H1 (cell line): ENCODE measurements at regions of chr6 and their contacts with region 1.

Region 1: GRCh38 chr6:72616406-72617015 is 5.4 kb upstream of the KCNQ5 start:
- DNase-seq: no peak
- H3K4me3 ChIP-seq: no peak overlapping the region
- H3K27ac ChIP-seq: no peak overlapping the region
- H3K4me1 ChIP-seq: peaks cover 0 to 13% (median 5%) of the 10 kb centered on the region in 4 experiments; a peak in 5 of 7 replicates
- H3K27me3 ChIP-seq: peaks cover 9 to 29% (median 25%) of the 10 kb centered on the region in 4 experiments
- CTCF ChIP-seq: peak in 2 of 3 experiments; percentile 35 to 47; a peak in 2 of 4 replicates
- EP300 ChIP-seq: no peak
- POLR2A ChIP-seq: no peak
- RAD21 ChIP-seq: peak; percentile 49 to 54

Region 2: DNA sequence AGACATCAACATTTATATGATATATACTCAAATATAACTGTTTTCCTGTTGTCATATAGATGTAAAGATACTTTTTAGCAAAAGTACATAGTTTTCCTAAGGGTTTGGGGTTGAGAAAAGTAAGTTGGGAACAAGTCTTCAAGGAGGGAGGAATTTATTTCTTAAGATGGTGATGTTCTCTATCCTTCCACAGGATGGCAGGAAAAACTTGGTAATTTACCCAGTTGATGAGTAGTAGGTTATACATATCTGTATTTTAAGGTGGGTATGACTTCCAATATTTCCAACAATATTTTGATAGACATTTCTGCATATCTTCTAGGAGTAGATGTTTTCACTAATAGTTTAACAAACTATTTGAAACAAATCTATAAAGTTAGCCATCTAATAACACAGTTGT is 475.7 kb before region 1 on chr6:
- CTCF ChIA-PET with region 1: no interaction called
- POLR2A ChIA-PET with region 1: no interaction called
- DNase-seq: no peak
- H3K4me3 ChIP-seq: no peak overlapping the region
- H3K27ac ChIP-seq: no peak overlapping the region
- H3K4me1 ChIP-seq: no peaks in the 10 kb centered on the region
- H3K27me3 ChIP-seq: no peaks in the 10 kb centered on the region
- CTCF ChIP-seq: peak in 1 of 3 experiments; percentile 14; a peak in 2 of 4 replicates
- EP300 ChIP-seq: no peak
- POLR2A ChIP-seq: no peak
- RAD21 ChIP-seq: peak; percentile 54

Region 3: GRCh38 chr6:72411872-72412708 is 204.4 kb before region 1 on chr6:
- CTCF ChIA-PET with region 1: interaction called, 17 read pairs
- POLR2A ChIA-PET with region 1: no interaction called
- DNase-seq: peak; percentile 62 to 94
- H3K4me3 ChIP-seq: no peak overlapping the region
- H3K27ac ChIP-seq: no peak overlapping the region
- H3K4me1 ChIP-seq: no peaks in the 10 kb centered on the region
- H3K27me3 ChIP-seq: no peaks in the 10 kb centered on the region
- CTCF ChIP-seq: peak; percentile 99 to 100 (median 100)
- EP300 ChIP-seq: no peak
- POLR2A ChIP-seq: no peak
- RAD21 ChIP-seq: peak; percentile 100

Region 4: DNA sequence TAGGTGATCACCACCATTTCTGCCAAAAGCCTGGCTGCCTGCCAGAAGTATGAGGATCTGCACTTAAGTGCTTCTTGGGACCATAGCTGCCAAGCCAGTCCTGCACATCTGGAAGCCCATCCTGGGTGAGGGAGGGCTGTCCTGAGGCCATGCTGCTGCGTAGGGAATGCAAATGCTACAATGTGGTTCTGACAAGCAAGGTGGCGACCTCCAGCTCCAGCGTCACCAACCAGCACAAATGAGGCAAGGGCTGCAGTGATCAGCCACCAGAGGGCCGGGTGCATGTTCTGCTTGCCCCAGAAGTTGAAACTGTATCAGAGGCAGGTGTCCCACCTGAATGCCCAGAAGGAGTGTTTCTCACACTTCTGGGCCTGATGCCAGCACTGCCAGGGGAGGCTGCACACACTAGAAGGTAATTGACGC is 93.8 kb before region 1 on chr6:
- CTCF ChIA-PET with region 1: interaction called, 15 read pairs
- POLR2A ChIA-PET with region 1: no interaction called
- DNase-seq: peak; percentile 36 to 70
- H3K4me3 ChIP-seq: no peak overlapping the region
- H3K27ac ChIP-seq: no peak overlapping the region
- H3K4me1 ChIP-seq: 0 out of 7 replicates have a peak, but pooled peaks cover 0 to 2% (median 0%) of the 10 kb centered on the region in 4 experiments
- H3K27me3 ChIP-seq: no peaks in the 10 kb centered on the region
- CTCF ChIP-seq: peak; percentile 81 to 98 (median 93)
- EP300 ChIP-seq: no peak
- POLR2A ChIP-seq: no peak
- RAD21 ChIP-seq: peak; percentile 68 to 76

Region 5: GRCh38 chr6:72639920-72640614 is 23.6 kb after region 1 on chr6:
- CTCF ChIA-PET with region 1: interaction called, 10 read pairs
- POLR2A ChIA-PET with region 1: no interaction called
- DNase-seq: no peak
- H3K4me3 ChIP-seq: no peak overlapping the region
- H3K27ac ChIP-seq: no peak overlapping the region
- H3K4me1 ChIP-seq: no peaks in the 10 kb centered on the region
- H3K27me3 ChIP-seq: no peaks in the 10 kb centered on the region
- CTCF ChIP-seq: no peak
- EP300 ChIP-seq: no peak
- POLR2A ChIP-seq: no peak
- RAD21 ChIP-seq: peak; percentile 43 to 44

Region 6: DNA sequence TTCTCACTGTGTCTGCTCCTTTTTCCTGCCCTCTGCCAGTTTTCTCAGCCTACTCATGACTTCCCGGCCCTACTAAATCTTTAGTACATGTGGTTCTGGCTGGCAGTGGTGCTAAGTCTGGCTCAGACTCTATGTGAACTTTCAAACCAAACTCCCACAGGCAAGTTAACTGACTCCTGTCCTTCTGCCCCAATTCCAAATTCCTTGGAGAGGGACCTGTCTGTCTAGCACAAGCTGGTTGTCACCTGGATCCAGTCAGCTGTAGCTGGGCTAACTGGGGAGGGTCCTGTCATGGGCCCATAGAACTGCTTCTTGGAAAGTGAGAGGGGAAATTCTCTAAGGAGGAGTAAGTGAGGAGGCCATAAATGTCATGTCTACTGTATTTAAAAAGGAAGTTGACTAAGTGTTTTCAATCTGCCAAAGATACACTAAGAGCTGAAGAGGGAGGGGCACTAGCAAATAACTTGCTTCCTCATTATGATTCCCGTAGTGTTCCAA is 245.5 kb after region 1 on chr6:
- CTCF ChIA-PET with region 1: no interaction called
- POLR2A ChIA-PET with region 1: no interaction called
- DNase-seq: no peak
- H3K4me3 ChIP-seq: no peak overlapping the region
- H3K27ac ChIP-seq: no peak overlapping the region
- H3K4me1 ChIP-seq: 0 out of 7 replicates have a peak, but pooled peaks cover 0 to 3% (median 0%) of the 10 kb centered on the region in 4 experiments
- H3K27me3 ChIP-seq: no peaks in the 10 kb centered on the region
- CTCF ChIP-seq: no peak
- EP300 ChIP-seq: no peak
- POLR2A ChIP-seq: no peak
- RAD21 ChIP-seq: no peak

Region 7: DNA sequence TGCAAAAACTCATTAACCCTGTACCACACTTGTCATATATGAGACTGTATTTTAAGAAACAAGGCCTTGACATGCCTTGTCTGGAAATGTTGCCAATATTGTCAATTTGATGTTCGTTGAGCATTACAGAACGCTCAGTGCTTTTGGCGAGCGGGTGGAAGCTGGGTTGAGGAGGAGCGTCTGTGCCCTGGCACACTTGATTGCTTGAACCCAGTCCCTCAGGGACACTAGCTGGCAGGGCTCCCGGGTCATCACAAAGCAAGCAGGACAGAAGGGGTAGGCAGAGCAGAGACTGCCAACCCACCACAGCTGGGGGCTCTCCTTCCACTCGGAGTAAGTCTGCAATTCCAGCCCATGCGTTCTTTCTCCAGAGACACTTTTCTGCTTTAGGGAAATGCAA is 322.5 kb after region 1 on chr6:
- CTCF ChIA-PET with region 1: no interaction called
- POLR2A ChIA-PET with region 1: no interaction called
- DNase-seq: no peak
- H3K4me3 ChIP-seq: no peak overlapping the region
- H3K27ac ChIP-seq: no peak overlapping the region
- H3K4me1 ChIP-seq: no peaks in the 10 kb centered on the region
- H3K27me3 ChIP-seq: no peaks in the 10 kb centered on the region
- CTCF ChIP-seq: no peak
- EP300 ChIP-seq: no peak
- POLR2A ChIP-seq: no peak
- RAD21 ChIP-seq: no peak

Region 8: DNA sequence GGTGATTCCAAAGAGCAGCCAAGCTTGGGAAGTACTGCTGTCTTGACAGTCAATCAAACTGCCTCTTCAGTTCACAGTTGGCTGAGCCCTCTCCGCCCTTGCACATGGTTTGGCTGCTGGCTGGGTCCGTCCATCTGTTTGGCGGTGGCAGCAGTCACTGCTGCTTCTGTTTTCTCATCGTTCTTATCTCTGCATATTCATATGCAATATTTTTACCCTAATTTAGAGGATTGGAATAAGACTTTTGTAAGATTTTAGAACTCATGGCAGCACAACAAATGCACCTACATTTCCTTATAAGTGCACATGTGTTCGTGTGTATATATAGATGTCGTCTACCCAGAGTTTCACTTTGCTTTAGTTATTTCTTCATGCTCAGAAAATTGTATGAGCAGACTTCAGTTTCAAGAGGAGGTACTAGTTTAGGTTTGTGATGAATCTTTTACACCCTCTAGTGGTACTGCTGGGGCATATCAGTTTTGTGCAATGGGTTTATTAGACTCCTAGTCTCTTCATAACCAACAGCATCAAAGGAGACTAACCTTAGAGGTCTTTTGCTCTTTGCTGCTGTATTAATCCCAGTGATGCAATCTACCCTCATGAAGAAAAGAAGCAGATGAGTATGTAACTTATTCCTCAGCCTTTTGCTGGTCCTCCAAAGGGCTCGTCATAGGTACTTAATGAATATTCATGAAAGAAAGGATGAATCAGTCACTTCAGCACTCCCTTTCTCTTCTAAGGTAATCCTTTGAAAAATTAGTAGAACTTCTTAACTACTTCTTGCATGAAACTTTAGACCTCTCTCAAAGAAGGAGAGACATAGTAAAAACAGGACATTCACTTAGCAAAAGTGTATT is 564.5 kb after region 1 on chr6:
- CTCF ChIA-PET with region 1: interaction called, 10 read pairs
- POLR2A ChIA-PET with region 1: no interaction called
- DNase-seq: no peak
- H3K4me3 ChIP-seq: no peak overlapping the region
- H3K27ac ChIP-seq: no peak overlapping the region
- H3K4me1 ChIP-seq: no peaks in the 10 kb centered on the region
- H3K27me3 ChIP-seq: no peaks in the 10 kb centered on the region
- CTCF ChIP-seq: peak in 2 of 3 experiments; percentile 54 to 76; a peak in 2 of 4 replicates
- EP300 ChIP-seq: no peak
- POLR2A ChIP-seq: no peak
- RAD21 ChIP-seq: peak; percentile 87 to 92